ENCODE measurements at regions of chr6 and their contacts with region 1.

Region 1: DNA sequence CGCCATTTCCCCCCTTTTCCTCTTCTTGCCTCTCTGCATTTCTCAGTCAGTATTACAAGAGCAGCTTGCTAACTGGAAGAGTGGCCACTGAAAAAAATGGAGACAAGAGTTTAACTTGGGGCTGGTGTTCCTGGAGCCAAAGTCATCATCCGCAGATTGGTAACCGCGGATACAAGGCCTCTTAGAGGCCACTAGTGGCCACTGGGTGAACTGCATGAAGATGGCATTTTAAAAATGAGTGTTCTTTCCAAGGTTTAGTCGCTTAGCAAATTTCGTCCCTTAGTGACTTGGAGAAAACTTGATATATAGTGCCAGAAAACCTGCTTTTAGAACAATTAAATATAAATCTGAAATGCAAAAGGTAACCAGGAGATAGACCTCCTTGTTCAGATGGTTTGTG is 4.8 kb downstream of the F13A1 start:
- DNase-seq: peak in 2 of 5 donors; percentile 24 to 43
- ATAC-seq: peak in 1 of 4 donors; percentile 40
- H3K4me3 ChIP-seq: peak overlapping the region in 3 of 12 donors; percentile 8 to 62 (median 13)
- H3K27ac ChIP-seq: peak overlapping the region in 1 of 12 donors; percentile 74
- H3K4me1 ChIP-seq: peaks cover 0 to 44% (median 11%) of the 10 kb centered on the region in 12 donors
- H3K27me3 ChIP-seq: peaks cover 0 to 13% (median 8%) of the 10 kb centered on the region in 9 donors
- CTCF ChIP-seq: peak; percentile 78 to 94 (median 87)
- POLR2A ChIP-seq: no peak

Region 2: GRCh38 chr6:5950361-5950785 is 365.3 kb before region 1 on chr6:
- intact Hi-C with region 1: loop called in 1 of 10 experiments (anchors 10 kb)
- DNase-seq: peak in 1 of 5 donors; percentile 24
- ATAC-seq: no peak
- H3K4me3 ChIP-seq: no peak overlapping the region
- H3K27ac ChIP-seq: no peak overlapping the region
- H3K4me1 ChIP-seq: no peaks in the 10 kb centered on the region
- H3K27me3 ChIP-seq: peaks cover 0 to 3% (median 0%) of the 10 kb centered on the region in 9 donors
- CTCF ChIP-seq: peak; percentile 39 to 63 (median 48)
- POLR2A ChIP-seq: no peak

Region 3: GRCh38 chr6:6057424-6058053 is 258.1 kb before region 1 on chr6:
- intact Hi-C with region 1: loop called in 6 of 10 experiments (anchors 2 to 10 kb)
- DNase-seq: no peak
- ATAC-seq: peak in 3 of 4 donors; percentile 51 to 62 (median 61)
- H3K4me3 ChIP-seq: no peak overlapping the region
- H3K27ac ChIP-seq: no peak overlapping the region
- H3K4me1 ChIP-seq: no peaks in the 10 kb centered on the region
- H3K27me3 ChIP-seq: peaks cover 0 to 9% (median 0%) of the 10 kb centered on the region in 9 donors
- CTCF ChIP-seq: peak; percentile 51 to 79 (median 67)
- POLR2A ChIP-seq: no peak

Region 4: GRCh38 chr6:6452002-6452401 is 136.3 kb after region 1 on chr6:
- intact Hi-C with region 1: loop called in 1 of 10 experiments (anchors 5 kb)
- DNase-seq: peak in 3 of 5 donors; percentile 25 to 36 (median 26)
- ATAC-seq: peak; percentile 85 to 94 (median 92)
- H3K4me3 ChIP-seq: no peak overlapping the region
- H3K27ac ChIP-seq: peak overlapping the region in 2 of 12 donors; percentile 13 to 46
- H3K4me1 ChIP-seq: peaks cover 0 to 20% (median 6%) of the 10 kb centered on the region in 12 donors
- H3K27me3 ChIP-seq: no peaks in the 10 kb centered on the region
- CTCF ChIP-seq: no peak
- POLR2A ChIP-seq: no peak

Region 5: GRCh38 chr6:6494677-6495076 is 179.0 kb after region 1 on chr6:
- intact Hi-C with region 1: loop called in 2 of 10 experiments (anchors 10 kb)
- DNase-seq: peak; percentile 44 to 77 (median 56)
- ATAC-seq: peak; percentile 55 to 82 (median 72)
- H3K4me3 ChIP-seq: no peak overlapping the region
- H3K27ac ChIP-seq: no peak overlapping the region
- H3K4me1 ChIP-seq: no peaks in the 10 kb centered on the region
- H3K27me3 ChIP-seq: peaks cover 0 to under 1% (median 0%) of the 10 kb centered on the region in 9 donors
- CTCF ChIP-seq: peak; percentile 41 to 67 (median 56)
- POLR2A ChIP-seq: no peak

Region 6: DNA sequence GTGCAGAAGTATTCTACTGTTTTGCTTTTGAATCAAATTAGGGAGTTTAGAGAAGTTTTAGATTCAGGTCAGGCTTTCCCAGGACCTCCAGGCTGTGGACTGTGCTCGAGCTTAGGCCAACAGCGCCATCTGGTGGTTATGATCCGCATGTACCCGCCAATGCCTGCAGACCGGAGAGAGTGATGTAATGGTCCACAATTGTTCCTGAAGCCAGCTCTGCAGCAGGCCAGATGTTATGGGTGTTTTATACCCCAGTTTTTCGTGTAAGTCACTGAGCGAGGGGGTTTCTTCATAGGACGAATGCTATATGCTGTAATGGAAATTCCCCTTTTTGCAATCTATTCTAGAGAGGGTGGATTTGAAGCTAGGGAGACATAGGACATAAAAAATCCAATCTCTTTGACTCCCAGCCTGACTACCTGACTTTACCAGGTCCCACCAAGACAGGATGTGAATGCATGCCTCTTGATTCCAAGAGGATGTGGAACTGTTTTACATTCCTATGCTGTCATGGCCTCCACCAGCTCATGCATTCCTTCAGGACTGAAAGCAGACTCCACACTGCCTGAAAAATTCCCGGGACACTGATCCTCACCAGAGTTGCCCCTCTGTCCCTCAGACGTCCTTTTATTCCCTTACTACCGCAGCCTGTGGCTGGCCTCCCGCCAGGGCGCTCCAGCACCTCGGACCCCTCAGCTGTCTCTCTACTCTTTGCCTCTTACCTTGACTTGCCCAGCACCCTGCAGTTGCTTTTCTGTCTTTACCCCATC is 231.6 kb after region 1 on chr6:
- intact Hi-C with region 1: loop called in 6 of 10 experiments (anchors 5 to 10 kb)
- DNase-seq: peak; percentile 84 to 90 (median 89)
- ATAC-seq: peak; percentile 95 to 97 (median 96)
- H3K4me3 ChIP-seq: peak overlapping the region; percentile 30 to 58 (median 52)
- H3K27ac ChIP-seq: peak overlapping the region in 5 of 12 donors; percentile 17 to 61 (median 47)
- H3K4me1 ChIP-seq: peaks cover 2 to 23% (median 9%) of the 10 kb centered on the region in 12 donors
- H3K27me3 ChIP-seq: peaks cover 0 to 19% (median 0%) of the 10 kb centered on the region in 9 donors
- CTCF ChIP-seq: peak; percentile 91 to 98 (median 96)
- POLR2A ChIP-seq: no peak